ENCODE measurements at regions of chrX and their contacts with region 1.

Region 1: DNA sequence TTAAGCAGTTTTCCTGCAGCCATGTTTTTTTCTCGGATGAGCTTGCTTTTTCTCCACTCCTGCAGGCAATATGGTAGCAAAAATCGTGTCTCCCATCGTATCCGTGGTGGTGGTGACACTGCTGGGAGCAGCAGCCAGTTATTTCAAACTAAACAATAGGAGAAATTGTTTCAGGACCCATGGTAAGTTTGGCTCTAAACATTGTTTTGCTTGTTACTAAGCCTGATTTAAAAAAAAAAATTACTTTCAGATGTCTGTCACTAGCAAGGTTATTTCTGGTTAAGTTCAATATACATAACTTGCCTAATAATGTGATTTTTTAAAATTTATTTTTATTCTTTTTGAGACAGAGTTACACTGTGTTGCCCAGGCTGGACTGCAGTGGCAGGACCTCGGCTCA is 17.5 kb upstream of the GYG2 start:
- DNase-seq: no peak
- ATAC-seq: no peak
- H3K4me3 ChIP-seq: no peak overlapping the region
- H3K4me3 Mint-ChIP-seq: no peak overlapping the region
- H3K27ac ChIP-seq: no peak overlapping the region
- H3K27ac Mint-ChIP-seq: no peak overlapping the region
- H3K4me1 ChIP-seq: no peaks in the 10 kb centered on the region
- H3K4me1 Mint-ChIP-seq: peaks cover 3% of the 10 kb centered on the region
- H3K27me3 ChIP-seq: no peaks in the 10 kb centered on the region
- H3K27me3 Mint-ChIP-seq: peaks cover 3% of the 10 kb centered on the region
- CTCF ChIP-seq: no peak

Region 2: DNA sequence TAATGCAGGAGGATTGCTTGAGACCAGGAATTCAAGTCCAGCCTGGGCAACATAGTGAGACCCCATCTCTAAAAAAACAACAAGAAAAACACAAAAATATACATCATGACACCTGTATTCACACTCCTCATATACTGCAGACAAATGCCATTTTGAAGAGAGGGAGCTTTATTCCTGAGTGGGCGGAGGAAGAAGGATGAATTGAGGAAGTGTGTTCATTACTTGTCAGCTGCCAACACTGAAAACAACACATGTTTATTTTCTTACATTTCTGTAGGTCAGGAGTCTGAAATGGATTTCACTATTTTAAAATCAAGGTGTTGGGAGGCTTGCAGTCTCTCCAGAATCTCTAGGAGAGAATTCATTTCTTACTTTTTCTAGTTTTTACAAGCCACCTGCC is 167.4 kb before region 1 on chrX:
- CTCF ChIA-PET with region 1: no interaction called
- POLR2A ChIA-PET with region 1: no interaction called
- intact Hi-C with region 1: loop called (anchors 1 kb)
- DNase-seq: no peak
- ATAC-seq: no peak
- H3K4me3 ChIP-seq: no peak overlapping the region
- H3K4me3 Mint-ChIP-seq: no peak overlapping the region
- H3K27ac ChIP-seq: no peak overlapping the region
- H3K27ac Mint-ChIP-seq: no peak overlapping the region
- H3K4me1 ChIP-seq: no peaks in the 10 kb centered on the region
- H3K4me1 Mint-ChIP-seq: peaks cover 3% of the 10 kb centered on the region
- H3K27me3 ChIP-seq: no peaks in the 10 kb centered on the region
- H3K27me3 Mint-ChIP-seq: no peaks in the 10 kb centered on the region
- CTCF ChIP-seq: no peak